Gastrocnemius medialis (tissue), 4 donors: ENCODE measurements at regions of chr13 and their contacts with region 1.

Region 1: GRCh38 chr13:111031531-111031961 is 83.6 kb upstream of the ARHGEF7 start:
- DNase-seq: peak; percentile 80 to 83
- ATAC-seq: peak; percentile 92 to 96
- H3K4me3 ChIP-seq: no peak overlapping the region
- H3K27ac ChIP-seq: peak overlapping the region; percentile 74 to 95 (median 82)
- H3K4me1 ChIP-seq: peaks cover 13 to 21% of the 10 kb centered on the region in 2 donors
- H3K27me3 ChIP-seq: no peaks in the 10 kb centered on the region
- CTCF ChIP-seq: no peak
- POLR2A ChIP-seq: peak; percentile 67 to 79

Region 2: DNA sequence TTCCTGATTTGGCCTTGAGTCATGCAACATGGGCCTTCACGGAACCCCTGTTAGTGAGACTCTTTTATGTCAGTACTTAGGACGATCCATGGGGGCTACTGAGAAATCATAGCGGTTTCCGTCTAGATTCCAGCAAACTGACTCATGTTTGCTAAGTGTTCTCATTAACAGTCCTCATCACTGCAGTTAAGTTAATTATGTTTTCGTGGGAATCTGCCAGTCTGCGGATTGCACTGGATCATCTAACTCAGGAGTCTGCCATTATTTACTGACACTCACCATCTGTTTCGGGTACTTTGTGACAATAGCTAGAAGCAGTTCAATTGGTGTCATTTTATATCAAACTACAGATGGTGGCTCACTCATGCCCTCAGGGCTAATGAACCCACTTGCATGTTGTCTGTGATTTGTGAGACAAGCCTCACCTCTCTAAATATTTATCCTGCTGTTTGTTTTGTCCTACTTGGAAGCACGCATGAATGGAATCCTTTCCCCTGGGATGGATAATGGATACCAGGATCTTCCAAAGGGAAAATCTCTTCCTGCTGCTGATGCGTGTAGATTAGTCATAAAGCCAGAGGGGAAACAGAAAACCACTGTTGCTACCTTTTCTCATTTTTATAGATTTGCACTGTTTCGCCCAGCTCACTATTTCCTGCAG is 531.8 kb before region 1 on chr13:
- in situ Hi-C with region 1: no loop called
- intact Hi-C with region 1: loop called (anchors 10 kb)
- DNase-seq: no peak
- ATAC-seq: no peak
- H3K4me3 ChIP-seq: no peak overlapping the region
- H3K27ac ChIP-seq: peak overlapping the region in 2 of 4 donors; percentile 76 to 85
- H3K4me1 ChIP-seq: peaks cover 5 to 10% of the 10 kb centered on the region in 2 donors
- H3K27me3 ChIP-seq: no peaks in the 10 kb centered on the region
- CTCF ChIP-seq: no peak
- POLR2A ChIP-seq: no peak

Region 3: GRCh38 chr13:110869805-110870706 is 161.5 kb before region 1 on chr13:
- in situ Hi-C with region 1: no loop called
- intact Hi-C with region 1: loop called (anchors 1 kb)
- DNase-seq: peak; percentile 96 to 98
- ATAC-seq: peak; percentile 87 to 88
- H3K4me3 ChIP-seq: peak overlapping the region; percentile 70 to 82 (median 77)
- H3K27ac ChIP-seq: peak overlapping the region; percentile 98 to 99 (median 99)
- H3K4me1 ChIP-seq: peaks cover 42% of the 10 kb centered on the region in 2 donors
- H3K27me3 ChIP-seq: no peaks in the 10 kb centered on the region
- CTCF ChIP-seq: peak; percentile 13 to 53 (median 26)
- POLR2A ChIP-seq: peak; percentile 49 to 80

Region 4: GRCh38 chr13:110925023-110925612 is 106.4 kb before region 1 on chr13:
- in situ Hi-C with region 1: no loop called
- intact Hi-C with region 1: loop called (anchors 2 kb)
- DNase-seq: no peak
- ATAC-seq: no peak
- H3K4me3 ChIP-seq: no peak overlapping the region
- H3K27ac ChIP-seq: peak overlapping the region; percentile 73 to 99 (median 85)
- H3K4me1 ChIP-seq: peaks cover 19 to 39% of the 10 kb centered on the region in 2 donors
- H3K27me3 ChIP-seq: no peaks in the 10 kb centered on the region
- CTCF ChIP-seq: peak in 4 of 5 experiments; percentile 33 to 48 (median 40)
- POLR2A ChIP-seq: no peak

Region 5: GRCh38 chr13:110944121-110944967 is 87.2 kb before region 1 on chr13:
- in situ Hi-C with region 1: loop called in 1 of 4 experiments (anchors 10 kb)
- intact Hi-C with region 1: no loop called
- DNase-seq: peak in 1 of 2 donors; percentile 39
- ATAC-seq: peak; percentile 82 to 86
- H3K4me3 ChIP-seq: no peak overlapping the region
- H3K27ac ChIP-seq: peak overlapping the region in 2 of 4 donors; percentile 27 to 37
- H3K4me1 ChIP-seq: peaks cover 4 to 6% of the 10 kb centered on the region in 2 donors
- H3K27me3 ChIP-seq: no peaks in the 10 kb centered on the region
- CTCF ChIP-seq: peak; percentile 36 to 81 (median 70)
- POLR2A ChIP-seq: no peak

Region 6: DNA sequence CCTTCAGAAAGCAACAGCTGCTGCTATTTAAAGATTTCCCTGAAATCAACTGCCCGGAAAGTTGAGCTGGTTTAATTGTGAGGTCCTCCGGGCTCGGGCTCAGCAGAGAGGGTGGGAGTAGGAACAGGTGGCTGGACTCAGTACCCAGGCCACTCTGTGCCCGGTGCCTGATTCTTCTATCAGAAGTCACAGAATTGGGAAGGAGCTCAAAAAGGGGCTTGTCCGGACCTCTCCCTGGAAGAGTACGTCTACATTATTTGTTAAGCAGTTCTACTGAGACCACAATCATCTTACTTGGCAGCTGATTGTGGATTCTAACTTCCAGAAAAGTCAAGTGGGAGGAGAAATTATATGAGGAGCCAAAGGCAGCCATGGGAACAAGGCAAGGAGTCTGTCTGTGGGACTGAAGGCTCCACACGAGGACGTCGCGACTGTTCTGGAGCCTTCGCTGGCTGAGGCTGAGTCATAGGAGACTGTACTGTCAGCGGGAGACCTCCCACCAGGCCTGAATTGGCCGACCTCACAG is 25.0 kb before region 1 on chr13:
- in situ Hi-C with region 1: no loop called
- intact Hi-C with region 1: loop called (anchors 1 kb)
- DNase-seq: peak; percentile 64 to 69
- ATAC-seq: peak; percentile 90 to 92
- H3K4me3 ChIP-seq: peak overlapping the region; percentile 0 to 14 (median 6)
- H3K27ac ChIP-seq: peak overlapping the region; percentile 79 to 98 (median 84)
- H3K4me1 ChIP-seq: peaks cover 16 to 33% of the 10 kb centered on the region in 2 donors
- H3K27me3 ChIP-seq: no peaks in the 10 kb centered on the region
- CTCF ChIP-seq: no peak
- POLR2A ChIP-seq: peak in 1 of 2 donors; percentile 57

Region 7: DNA sequence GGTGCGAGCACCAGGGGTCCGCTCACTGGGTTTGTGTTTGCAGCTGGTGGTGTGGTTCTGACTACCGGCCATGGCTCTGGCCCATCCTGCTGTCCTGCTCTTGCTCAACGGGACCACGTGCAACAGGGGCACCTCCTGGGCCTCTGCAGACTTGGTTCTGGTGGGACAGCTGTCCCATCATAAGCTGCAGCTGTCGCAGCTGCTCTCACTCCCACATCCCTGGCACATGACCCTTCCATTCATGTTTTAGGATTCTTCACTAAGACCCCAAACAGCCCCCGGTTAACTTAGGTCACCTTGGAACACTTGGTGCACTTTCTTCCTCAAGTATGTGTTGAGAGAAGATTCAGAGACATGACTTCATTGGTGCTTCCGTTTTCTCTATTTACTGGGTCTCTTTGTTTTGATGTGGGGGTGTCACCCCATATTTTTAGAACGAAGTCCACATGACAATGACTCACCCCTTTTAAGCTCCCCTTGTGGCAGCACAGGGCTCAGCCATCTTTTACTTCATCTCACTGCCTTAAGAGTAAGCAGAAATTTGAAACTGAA is 15.1 kb after region 1 on chr13:
- in situ Hi-C with region 1: no loop called
- intact Hi-C with region 1: loop called (anchors 1 kb)
- DNase-seq: peak in 1 of 2 donors; percentile 70
- ATAC-seq: peak; percentile 67 to 82
- H3K4me3 ChIP-seq: no peak overlapping the region
- H3K27ac ChIP-seq: peak overlapping the region; percentile 54 to 83 (median 66)
- H3K4me1 ChIP-seq: peaks cover 0 to 15% of the 10 kb centered on the region in 2 donors
- H3K27me3 ChIP-seq: no peaks in the 10 kb centered on the region
- CTCF ChIP-seq: peak in 3 of 5 experiments; percentile 27 to 31 (median 30)
- POLR2A ChIP-seq: peak in 1 of 2 donors; percentile 25

Region 8: DNA sequence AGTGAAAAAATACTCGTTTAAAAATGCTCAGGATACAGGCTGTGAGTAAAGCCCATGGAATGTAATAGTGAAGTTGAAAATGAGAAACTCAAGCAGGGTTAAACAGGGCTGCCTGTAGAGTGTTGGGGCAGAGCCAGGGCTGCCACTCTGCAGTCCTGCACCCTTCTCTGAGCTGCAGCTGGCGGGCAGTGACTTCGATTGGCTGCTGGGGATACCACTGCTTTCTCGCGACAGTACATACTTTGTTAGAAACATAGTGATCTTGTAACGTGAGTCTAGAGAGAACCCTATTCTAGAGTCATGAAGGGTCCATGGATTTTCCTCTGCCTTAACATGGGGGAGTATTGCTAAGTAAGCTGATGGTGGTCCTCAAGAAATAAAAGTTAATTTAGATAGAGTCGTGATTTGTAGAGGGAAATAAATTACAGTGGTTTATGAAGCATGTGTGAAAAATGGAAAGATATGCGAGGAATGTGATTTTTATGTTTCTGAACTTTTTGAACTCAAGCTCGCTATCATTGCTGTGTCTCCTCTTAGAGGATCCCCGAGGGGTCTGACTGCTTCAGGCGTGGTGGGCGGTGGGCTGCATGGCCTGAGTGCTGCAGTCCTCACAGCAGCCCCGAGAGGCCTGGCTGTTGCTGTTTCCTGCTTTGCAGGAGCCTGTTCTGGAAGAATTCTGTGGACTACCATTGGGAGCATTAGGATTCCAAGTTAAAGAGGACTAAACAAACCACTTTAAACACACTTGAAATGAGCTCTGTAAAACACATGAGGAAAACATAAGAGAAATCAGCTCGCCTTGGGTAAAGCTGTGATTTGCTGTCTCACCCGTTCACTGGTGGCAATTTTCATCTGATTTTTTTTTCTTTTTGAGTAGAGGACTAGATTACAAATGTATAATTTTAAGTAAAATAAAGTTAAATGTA is 179.3 kb after region 1 on chr13:
- in situ Hi-C with region 1: no loop called
- intact Hi-C with region 1: no loop called
- DNase-seq: peak in 1 of 2 donors; percentile 42
- ATAC-seq: peak in 1 of 2 donors; percentile 47
- H3K4me3 ChIP-seq: peak overlapping the region in 3 of 4 donors; percentile 1 to 8 (median 6)
- H3K27ac ChIP-seq: peak overlapping the region; percentile 37 to 83 (median 74)
- H3K4me1 ChIP-seq: peaks cover 77 to 89% of the 10 kb centered on the region in 2 donors
- H3K27me3 ChIP-seq: no peaks in the 10 kb centered on the region
- CTCF ChIP-seq: no peak
- POLR2A ChIP-seq: no peak

Region 9: GRCh38 chr13:112072531-112073244 is 1041.1 kb after region 1 on chr13:
- in situ Hi-C with region 1: no loop called
- intact Hi-C with region 1: no loop called
- DNase-seq: no peak
- ATAC-seq: no peak
- H3K4me3 ChIP-seq: peak overlapping the region in 3 of 4 donors; percentile 13 to 25 (median 25)
- H3K27ac ChIP-seq: no peak overlapping the region
- H3K4me1 ChIP-seq: peaks cover 0 to 4% of the 10 kb centered on the region in 2 donors
- H3K27me3 ChIP-seq: peaks cover 74 to 84% (median 76%) of the 10 kb centered on the region in 3 donors
- CTCF ChIP-seq: no peak
- POLR2A ChIP-seq: no peak